HepG2 (cell line): ENCODE measurements at regions of chr16 and their contacts with region 1.

Region 1: GRCh38 chr16:79601931-79602627 is 1.5 kb upstream of the MAF start:
- DNase-seq: peak; percentile 76
- ATAC-seq: peak; percentile 46
- H3K4me3 ChIP-seq: peak overlapping the region; percentile 44 to 67 (median 50); a peak in 5 of 6 replicates
- H3K27ac ChIP-seq: no peak overlapping the region
- H3K4me1 ChIP-seq: peaks cover 28% of the 10 kb centered on the region
- H3K27me3 ChIP-seq: peaks cover 9 to 29% of the 10 kb centered on the region in 2 experiments
- CTCF ChIP-seq: peak; percentile 82
- EP300 ChIP-seq: no peak
- POLR2A ChIP-seq: no peak
- RAD21 ChIP-seq: peak; percentile 53; the same call in 1 of the 2 replicates

Region 2: GRCh38 chr16:78235168-78235800 is 1366.8 kb before region 1 on chr16:
- CTCF ChIA-PET with region 1: no interaction called
- POLR2A ChIA-PET with region 1: no interaction called
- in situ Hi-C with region 1: loop called (anchors 25 kb)
- intact Hi-C with region 1: no loop called
- DNase-seq: peak; percentile 65
- ATAC-seq: peak; percentile 96
- H3K4me3 ChIP-seq: no peak overlapping the region
- H3K27ac ChIP-seq: no peak overlapping the region
- H3K4me1 ChIP-seq: peaks cover 21% of the 10 kb centered on the region
- H3K27me3 ChIP-seq: no peaks in the 10 kb centered on the region
- CTCF ChIP-seq: peak; percentile 93
- EP300 ChIP-seq: no peak
- POLR2A ChIP-seq: no peak
- RAD21 ChIP-seq: peak; percentile 83

Region 3: GRCh38 chr16:78925083-78925767 is 676.9 kb before region 1 on chr16:
- CTCF ChIA-PET with region 1: interaction called, 9 read pairs
- POLR2A ChIA-PET with region 1: no interaction called
- in situ Hi-C with region 1: loop called (anchors 10 kb)
- intact Hi-C with region 1: no loop called
- DNase-seq: peak; percentile 24
- ATAC-seq: peak; percentile 95
- H3K4me3 ChIP-seq: no peak overlapping the region
- H3K27ac ChIP-seq: no peak overlapping the region
- H3K4me1 ChIP-seq: peaks cover 6% of the 10 kb centered on the region; the same call in 1 of the 2 replicates
- H3K27me3 ChIP-seq: no peaks in the 10 kb centered on the region
- CTCF ChIP-seq: peak; percentile 63
- EP300 ChIP-seq: no peak
- POLR2A ChIP-seq: no peak
- RAD21 ChIP-seq: peak; percentile 59; the same call in 1 of the 2 replicates

Region 4: DNA sequence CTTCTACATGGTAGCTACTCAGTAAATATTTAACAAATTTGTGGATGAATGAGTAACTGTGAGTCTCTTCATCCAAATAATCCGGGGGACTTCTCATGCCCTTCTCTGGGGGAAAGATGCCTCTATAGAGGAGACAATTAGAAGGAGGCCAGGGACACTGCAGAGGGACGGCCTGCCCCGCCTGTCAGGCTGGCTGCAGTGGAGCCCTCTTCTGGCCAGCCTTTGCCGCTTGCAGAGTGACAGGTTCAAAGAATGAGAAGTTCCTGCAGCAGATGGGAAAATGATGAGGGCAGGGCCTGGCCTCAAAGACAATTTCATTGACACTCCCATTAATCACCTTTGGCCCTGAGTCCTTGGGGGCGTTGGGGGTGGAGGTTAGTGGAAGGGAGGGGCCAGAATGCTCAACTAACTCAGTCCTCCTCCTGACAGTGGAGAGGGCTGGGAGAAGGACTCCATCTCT is 340.6 kb before region 1 on chr16:
- CTCF ChIA-PET with region 1: no interaction called
- POLR2A ChIA-PET with region 1: no interaction called
- in situ Hi-C with region 1: no loop called
- intact Hi-C with region 1: loop called (anchors 5 kb)
- DNase-seq: peak; percentile 21
- ATAC-seq: peak; percentile 96
- H3K4me3 ChIP-seq: no peak overlapping the region
- H3K27ac ChIP-seq: no peak overlapping the region
- H3K4me1 ChIP-seq: no peaks in the 10 kb centered on the region
- H3K27me3 ChIP-seq: 0 out of 5 replicates have a peak, but pooled peaks cover 0 to 5% of the 10 kb centered on the region in 2 experiments
- CTCF ChIP-seq: peak; percentile 80
- EP300 ChIP-seq: no peak
- POLR2A ChIP-seq: no peak
- RAD21 ChIP-seq: peak; percentile 50

Region 5: DNA sequence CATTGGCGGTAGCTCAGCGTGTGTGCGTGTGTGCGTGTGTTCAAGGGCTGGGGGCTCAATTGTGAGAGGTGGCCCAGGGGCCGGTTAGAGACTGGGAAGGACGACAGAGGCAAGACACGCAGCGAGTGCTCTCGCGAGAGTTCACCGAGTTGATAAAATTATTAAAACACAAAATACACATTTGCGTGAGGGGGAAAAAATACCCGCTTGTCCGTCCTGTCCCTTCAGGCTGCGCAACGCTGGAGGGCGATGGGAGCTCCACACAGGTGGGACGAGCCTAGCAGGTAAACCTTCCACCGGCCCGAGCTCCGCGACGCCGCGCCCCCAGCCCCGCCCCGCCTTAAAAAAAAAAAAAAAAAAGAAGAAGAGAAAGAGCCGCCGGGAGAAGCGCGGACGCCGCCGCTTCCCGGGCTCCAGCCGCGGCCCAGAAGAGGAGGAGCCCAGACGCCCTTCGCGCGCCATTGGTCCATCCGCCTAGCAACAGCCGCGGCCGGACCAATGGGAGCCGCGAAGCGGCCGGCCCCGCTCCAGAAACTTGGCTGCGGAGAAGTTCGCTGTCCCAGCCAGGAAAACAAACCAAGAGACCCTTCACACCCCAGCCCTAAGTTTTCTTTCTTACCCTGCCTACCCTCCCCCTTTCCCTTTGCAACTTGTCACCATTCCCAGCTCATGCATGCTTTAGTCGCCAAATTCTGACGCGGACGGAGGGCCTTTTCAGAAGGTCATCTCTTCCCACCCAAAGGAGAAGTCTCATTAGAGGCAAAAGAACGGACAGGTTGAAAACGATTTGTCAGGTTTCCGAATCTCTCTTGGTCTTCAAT is 168.4 kb after region 1 on chr16:
- CTCF ChIA-PET with region 1: no interaction called
- POLR2A ChIA-PET with region 1: no interaction called
- in situ Hi-C with region 1: no loop called
- intact Hi-C with region 1: loop called (anchors 5 kb)
- DNase-seq: peak; percentile 63
- ATAC-seq: peak; percentile 98
- H3K4me3 ChIP-seq: peak overlapping the region; percentile 58 to 71 (median 62)
- H3K27ac ChIP-seq: no peak overlapping the region
- H3K4me1 ChIP-seq: peaks cover 33% of the 10 kb centered on the region
- H3K27me3 ChIP-seq: peaks cover 0 to 24% of the 10 kb centered on the region in 2 experiments; a peak in 2 of 5 replicates
- CTCF ChIP-seq: no peak
- EP300 ChIP-seq: peak in 1 of 2 experiments; percentile 66; a peak in 2 of 4 replicates
- POLR2A ChIP-seq: no peak
- RAD21 ChIP-seq: no peak

Region 6: GRCh38 chr16:79792664-79793351 is 190.7 kb after region 1 on chr16:
- CTCF ChIA-PET with region 1: no interaction called
- POLR2A ChIA-PET with region 1: no interaction called
- in situ Hi-C with region 1: no loop called
- intact Hi-C with region 1: no loop called
- DNase-seq: no peak
- ATAC-seq: no peak
- H3K4me3 ChIP-seq: no peak overlapping the region
- H3K27ac ChIP-seq: no peak overlapping the region
- H3K4me1 ChIP-seq: no peaks in the 10 kb centered on the region
- H3K27me3 ChIP-seq: no peaks in the 10 kb centered on the region
- CTCF ChIP-seq: no peak
- EP300 ChIP-seq: no peak
- POLR2A ChIP-seq: no peak
- RAD21 ChIP-seq: no peak

Region 7: DNA sequence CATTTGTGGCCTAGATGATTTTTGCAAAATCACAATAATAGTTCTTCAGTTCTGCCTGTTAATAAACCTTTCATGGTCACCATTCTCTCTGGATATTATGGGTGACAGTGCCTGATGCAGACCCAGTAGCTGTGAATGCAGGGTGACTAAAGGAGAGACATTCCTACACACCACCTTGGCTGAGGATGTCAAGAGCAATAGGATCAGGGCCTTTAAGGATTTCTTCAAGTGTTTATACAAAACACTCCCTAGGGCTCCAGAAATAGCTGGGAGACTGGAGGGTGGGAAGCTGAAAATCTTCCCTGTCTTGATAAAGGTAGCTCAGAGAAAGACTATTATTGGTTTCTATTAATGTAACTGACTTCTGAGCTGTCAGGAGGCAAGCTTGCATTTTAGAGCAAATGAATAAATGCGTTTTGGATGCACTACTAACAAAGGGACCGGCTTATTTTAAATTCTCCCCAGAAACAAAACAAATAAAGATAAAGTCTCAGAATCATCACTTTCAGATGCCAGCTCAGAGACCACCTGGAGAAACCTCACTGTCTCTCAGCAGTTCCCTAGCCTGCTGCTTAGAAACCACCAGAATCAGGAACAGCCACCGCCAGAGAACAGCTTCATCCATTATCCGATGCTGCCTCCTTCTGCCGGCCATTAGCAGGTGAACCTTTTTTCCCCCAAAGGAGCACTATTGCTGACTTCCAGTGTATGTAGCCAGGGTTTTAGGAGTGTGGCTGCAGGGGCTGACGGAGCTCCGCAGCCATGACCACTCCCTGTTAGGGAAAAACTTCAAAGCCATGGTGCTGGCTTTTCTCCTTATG is 767.3 kb after region 1 on chr16:
- CTCF ChIA-PET with region 1: no interaction called
- POLR2A ChIA-PET with region 1: no interaction called
- in situ Hi-C with region 1: no loop called
- intact Hi-C with region 1: loop called (anchors 2 kb)
- DNase-seq: peak; percentile 23
- ATAC-seq: peak; percentile 94
- H3K4me3 ChIP-seq: no peak overlapping the region
- H3K27ac ChIP-seq: no peak overlapping the region
- H3K4me1 ChIP-seq: no peaks in the 10 kb centered on the region
- H3K27me3 ChIP-seq: no peaks in the 10 kb centered on the region
- CTCF ChIP-seq: peak; percentile 83
- EP300 ChIP-seq: no peak
- POLR2A ChIP-seq: no peak
- RAD21 ChIP-seq: peak; percentile 70